Dorsolateral prefrontal cortex (tissue), 120 donors: ENCODE measurements at regions of chr7 and their contacts with region 1.

Region 1: DNA sequence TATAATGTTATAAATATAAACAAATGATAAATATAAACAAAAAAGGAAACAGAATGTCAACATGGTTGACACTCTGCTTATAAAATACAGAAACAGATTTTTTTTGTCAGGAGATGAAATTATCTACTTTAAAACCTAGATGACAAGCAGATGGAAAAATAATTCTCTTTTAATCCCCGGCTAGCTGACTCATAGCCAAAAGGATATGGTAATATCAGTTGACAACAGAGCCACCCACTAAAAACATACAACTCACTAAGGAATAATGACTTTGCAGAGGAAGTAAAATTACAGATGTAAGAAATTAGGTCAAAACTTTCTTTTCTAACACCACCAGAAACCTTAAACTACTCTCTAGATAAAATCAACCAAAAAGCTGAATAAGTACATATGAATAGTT is 131.1 kb upstream of the ABCB5 start:
- DNase-seq: no peak
- H3K4me3 ChIP-seq: no peak overlapping the region
- H3K27ac ChIP-seq: no peak overlapping the region
- H3K27me3 ChIP-seq: no peaks in the 10 kb centered on the region
- CTCF ChIP-seq: no peak

Region 2: GRCh38 chr7:20440472-20441105 is 43.8 kb before region 1 on chr7:
- intact Hi-C with region 1: loop called in 1 of 2 experiments (anchors 10 kb)
- DNase-seq: peak in 2 of 10 donors; percentile 34 to 44
- H3K4me3 ChIP-seq: no peak overlapping the region
- H3K27ac ChIP-seq: no peak overlapping the region
- H3K27me3 ChIP-seq: peaks cover 0 to 4% (median 0%) of the 10 kb centered on the region in 45 donors
- CTCF ChIP-seq: peak in 46 of 56 donors; percentile 7 to 62 (median 32)